ENCODE measurements at regions of chr10 and their contacts with region 1.

Region 1: DNA sequence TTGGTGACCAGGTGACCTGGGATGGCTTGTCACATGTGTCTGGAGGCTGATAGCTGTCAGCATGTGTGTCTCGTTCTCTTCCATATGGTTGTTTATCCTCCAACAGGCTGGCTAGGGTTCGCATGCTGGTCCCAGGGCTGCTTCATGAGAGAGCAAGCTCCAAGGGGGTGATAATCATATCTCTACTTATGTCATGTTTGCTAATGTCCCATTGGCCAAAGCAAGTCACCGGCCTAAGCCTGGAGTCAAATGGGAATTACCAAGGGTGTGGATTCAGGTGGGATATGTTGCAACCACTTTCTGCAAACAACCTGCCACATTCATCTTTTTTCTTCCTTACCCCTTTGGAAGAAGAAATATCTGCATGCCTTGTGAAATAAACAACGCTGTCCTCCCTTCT is 239.4 kb downstream of the NSUN6 start:
- DNase-seq: no peak
- ATAC-seq: no peak
- H3K4me3 ChIP-seq: no peak overlapping the region
- H3K27ac ChIP-seq: no peak overlapping the region
- H3K4me1 ChIP-seq: no peaks in the 10 kb centered on the region
- H3K27me3 ChIP-seq: no peaks in the 10 kb centered on the region
- CTCF ChIP-seq: no peak

Region 2: GRCh38 chr10:18437486-18437885 is 25.5 kb after region 1 on chr10:
- CTCF ChIA-PET with region 1: no interaction called
- POLR2A ChIA-PET with region 1: no interaction called
- intact Hi-C with region 1: loop called (anchors 2 kb)
- DNase-seq: peak; percentile 6
- ATAC-seq: no peak
- H3K4me3 ChIP-seq: no peak overlapping the region
- H3K27ac ChIP-seq: no peak overlapping the region
- H3K4me1 ChIP-seq: no peaks in the 10 kb centered on the region
- H3K27me3 ChIP-seq: 0 out of 2 replicates have a peak, but pooled peaks cover 5% of the 10 kb centered on the region
- CTCF ChIP-seq: no peak